HepG2 (cell line): ENCODE measurements at regions of chr17 and their contacts with region 1.

Region 1: GRCh38 chr17:42248351-42249179 is 27.6 kb downstream of the STAT5B start:
- DNase-seq: peak; percentile 93
- ATAC-seq: peak; percentile 97
- H3K4me3 ChIP-seq: peak overlapping the region; percentile 38 to 55 (median 46)
- H3K27ac ChIP-seq: peak overlapping the region; percentile 57
- H3K4me1 ChIP-seq: peaks cover 60% of the 10 kb centered on the region
- H3K27me3 ChIP-seq: no peaks in the 10 kb centered on the region
- CTCF ChIP-seq: peak; percentile 45
- EP300 ChIP-seq: no peak
- POLR2A ChIP-seq: peak; percentile 47 to 54; a peak in 3 of 4 replicates
- RAD21 ChIP-seq: no peak; the same call in 1 of the 2 replicates

Region 2: DNA sequence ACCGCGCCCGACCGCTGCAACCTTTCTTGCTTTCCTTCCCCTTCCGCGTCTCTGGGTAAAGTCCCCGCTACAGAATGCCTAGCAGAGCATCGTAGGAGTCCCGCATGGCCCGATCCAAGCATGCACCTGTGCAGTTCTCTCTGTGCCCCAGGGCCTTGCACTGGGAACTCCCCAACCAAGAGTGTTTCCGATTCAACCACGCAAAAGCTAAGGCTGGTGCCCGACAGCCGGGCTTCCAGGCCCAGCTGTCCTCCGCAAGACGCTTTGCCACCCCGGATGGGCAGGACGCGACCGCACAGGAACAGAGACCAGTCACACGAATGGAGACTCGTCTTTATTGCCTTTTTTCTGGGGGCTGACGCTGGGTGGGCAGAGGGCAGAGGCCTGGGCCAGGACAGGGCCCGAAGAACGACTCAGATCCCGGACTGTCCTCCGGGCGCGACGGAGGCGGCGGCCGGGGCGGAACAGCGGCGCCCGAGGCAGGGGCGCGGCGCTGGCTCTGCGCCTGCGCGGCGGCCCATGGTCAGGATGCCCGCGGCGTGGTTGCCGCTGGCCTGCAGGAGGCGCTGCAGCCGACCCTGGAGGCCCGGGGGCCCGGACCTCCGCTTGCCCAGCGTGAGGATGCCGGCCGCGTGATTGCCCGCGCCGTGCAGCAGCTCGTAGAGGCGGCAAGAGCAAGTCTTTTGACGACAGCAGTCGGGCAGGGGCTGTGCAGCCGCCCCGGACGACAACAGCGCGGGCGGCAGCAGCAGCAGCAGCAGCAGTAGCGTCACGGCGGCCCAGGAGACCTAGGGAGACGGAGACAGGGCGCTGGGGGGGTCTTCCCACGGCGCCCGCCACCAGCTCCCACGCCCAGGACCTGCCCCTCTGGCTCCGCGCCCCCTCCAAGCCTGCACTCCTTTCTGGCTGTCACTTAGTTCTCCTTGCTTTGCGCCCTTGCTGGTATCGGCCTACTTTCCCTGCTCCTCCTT is 64.5 kb before region 1 on chr17:
- CTCF ChIA-PET with region 1: no interaction called
- POLR2A ChIA-PET with region 1: interaction called, 18 read pairs
- in situ Hi-C with region 1: no loop called
- intact Hi-C with region 1: loop called (anchors 10 kb)
- DNase-seq: peak; percentile 70
- ATAC-seq: peak; percentile 78
- H3K4me3 ChIP-seq: peak overlapping the region; percentile 73 to 88 (median 84)
- H3K27ac ChIP-seq: peak overlapping the region; percentile 43
- H3K4me1 ChIP-seq: peaks cover 52% of the 10 kb centered on the region
- H3K27me3 ChIP-seq: peaks cover 0 to 21% of the 10 kb centered on the region in 2 experiments; a peak in 4 of 5 replicates
- CTCF ChIP-seq: peak; percentile 90
- EP300 ChIP-seq: 0 out of 4 replicates have a peak, but pooled peaks of 1 of the 2 experiments have one; percentile 19
- POLR2A ChIP-seq: peak; percentile 51 to 74; a peak in 2 of 4 replicates
- RAD21 ChIP-seq: peak; percentile 94

Region 3: GRCh38 chr17:42221937-42222745 is 26.4 kb before region 1 on chr17:
- CTCF ChIA-PET with region 1: interaction called, 4 read pairs
- POLR2A ChIA-PET with region 1: interaction called, 3 read pairs
- in situ Hi-C with region 1: no loop called
- intact Hi-C with region 1: loop called (anchors 2 kb)
- DNase-seq: peak; percentile 56
- ATAC-seq: peak; percentile 81
- H3K4me3 ChIP-seq: no peak overlapping the region
- H3K27ac ChIP-seq: no peak overlapping the region
- H3K4me1 ChIP-seq: no peaks in the 10 kb centered on the region
- H3K27me3 ChIP-seq: no peaks in the 10 kb centered on the region
- CTCF ChIP-seq: peak; percentile 80
- EP300 ChIP-seq: no peak
- POLR2A ChIP-seq: no peak
- RAD21 ChIP-seq: peak; percentile 82

Region 4: GRCh38 chr17:42276359-42276608 is 27.7 kb after region 1 on chr17 and contains the start of gene STAT5B:
- CTCF ChIA-PET with region 1: no interaction called
- POLR2A ChIA-PET with region 1: interaction called, 20 read pairs
- in situ Hi-C with region 1: no loop called
- intact Hi-C with region 1: loop called (anchors 5 kb)
- DNase-seq: no peak
- ATAC-seq: peak; percentile 20; the same call in 2 of the 3 replicates
- H3K4me3 ChIP-seq: peak within 1 kb of the TSS; percentile 81 to 96 (median 91)
- H3K27ac ChIP-seq: peak within 1 kb of the TSS; percentile 94
- H3K4me1 ChIP-seq: peaks cover 63% of the 10 kb centered on the region
- H3K27me3 ChIP-seq: peaks cover 0 to 9% of the 10 kb centered on the region in 2 experiments; a peak in 2 of 5 replicates
- CTCF ChIP-seq: no peak
- EP300 ChIP-seq: no peak
- POLR2A ChIP-seq: peak in 1 of 2 experiments; percentile 67; a peak in 1 of 4 replicates
- RAD21 ChIP-seq: no peak
- total RNA-seq, gene STAT5B: 17.2 and 21.0 TPM in 2 replicates

Region 5: DNA sequence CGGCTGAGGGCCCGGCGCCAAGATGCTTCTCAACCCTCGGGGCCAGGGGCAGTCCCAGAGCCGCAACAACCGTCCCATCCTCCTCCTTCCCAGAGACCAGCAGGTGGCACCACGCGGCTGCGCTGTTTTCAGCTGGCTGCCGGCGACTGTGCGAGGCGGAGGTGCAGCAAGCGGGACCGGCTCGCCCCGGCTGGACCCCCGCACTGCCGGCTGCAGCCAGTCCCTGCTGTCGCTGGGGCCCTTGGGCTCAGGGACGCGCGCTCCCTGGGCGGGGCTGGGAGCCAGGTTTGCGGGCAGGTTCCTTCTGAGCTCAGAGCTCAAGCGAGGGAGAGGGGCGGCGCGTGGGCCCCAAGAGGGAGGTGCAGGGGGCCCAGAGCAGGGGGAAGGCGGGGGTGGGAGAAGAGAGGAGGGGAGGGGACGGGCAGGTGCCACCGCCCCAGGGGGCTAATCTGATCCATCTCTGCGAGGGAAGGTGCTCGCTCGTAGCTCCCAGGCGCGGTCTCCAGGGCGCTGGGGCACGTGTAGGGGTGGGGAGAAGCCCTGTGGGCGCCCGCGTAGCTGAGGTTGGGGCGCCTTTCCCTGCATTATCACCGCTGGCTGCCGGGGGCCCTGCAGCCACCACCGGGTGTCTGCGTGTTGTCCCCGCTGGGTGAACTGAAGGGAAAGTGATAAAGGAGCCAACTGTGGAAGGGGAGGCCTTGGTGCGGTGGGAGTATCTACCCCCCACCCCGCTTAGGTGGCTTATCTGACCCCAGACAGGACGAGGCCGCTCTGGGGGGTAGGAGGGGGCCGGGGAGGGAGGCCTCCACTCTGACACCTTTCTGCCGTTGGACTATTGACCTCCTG is 63.9 kb after region 1 on chr17:
- CTCF ChIA-PET with region 1: no interaction called
- POLR2A ChIA-PET with region 1: interaction called, 21 read pairs
- in situ Hi-C with region 1: no loop called
- intact Hi-C with region 1: no loop called
- DNase-seq: peak; percentile 80
- ATAC-seq: peak; percentile 83
- H3K4me3 ChIP-seq: peak overlapping the region; percentile 47 to 65 (median 51)
- H3K27ac ChIP-seq: peak overlapping the region; percentile 73
- H3K4me1 ChIP-seq: peaks cover 90% of the 10 kb centered on the region
- H3K27me3 ChIP-seq: no peaks in the 10 kb centered on the region
- CTCF ChIP-seq: peak; percentile 96
- EP300 ChIP-seq: peak in 1 of 2 experiments; percentile 13; a peak in 1 of 4 replicates
- POLR2A ChIP-seq: peak in 1 of 2 experiments; percentile 56; a peak in 1 of 4 replicates
- RAD21 ChIP-seq: peak; percentile 92